Mammary epithelial cell (primary cell): ENCODE measurements at regions of chr15 and their contacts with region 1.

Region 1: GRCh38 chr15:78859971-78860732 is 12.5 kb upstream of the MORF4L1 start:
- DNase-seq: peak; percentile 69
- H3K4me3 ChIP-seq: peak overlapping the region; percentile 51 to 55 (median 52)
- H3K27ac ChIP-seq: peak overlapping the region; percentile 11
- H3K4me1 ChIP-seq: no peaks in the 10 kb centered on the region
- H3K27me3 ChIP-seq: no peaks in the 10 kb centered on the region
- CTCF ChIP-seq: peak; percentile 59 to 62

Region 2: GRCh38 chr15:78761891-78762385 is 98.2 kb before region 1 on chr15:
- CTCF ChIA-PET with region 1: no interaction called
- dilution Hi-C with region 1: no loop called
- in situ Hi-C with region 1: no loop called
- intact Hi-C with region 1: loop called (anchors 5 kb)
- DNase-seq: no peak
- H3K4me3 ChIP-seq: no peak overlapping the region
- H3K27ac ChIP-seq: no peak overlapping the region
- H3K4me1 ChIP-seq: peaks cover 19% of the 10 kb centered on the region
- H3K27me3 ChIP-seq: no peaks in the 10 kb centered on the region
- CTCF ChIP-seq: no peak

Region 3: GRCh38 chr15:78811124-78811824 is 48.9 kb before region 1 on chr15 and contains the start of gene ADAMTS7:
- CTCF ChIA-PET with region 1: no interaction called
- dilution Hi-C with region 1: no loop called
- in situ Hi-C with region 1: no loop called
- intact Hi-C with region 1: loop called (anchors 1 kb)
- DNase-seq: peak; percentile 51
- H3K4me3 ChIP-seq: peak within 1 kb of the TSS; percentile 61 to 74 (median 70)
- H3K27ac ChIP-seq: peak within 1 kb of the TSS; percentile 11
- H3K4me1 ChIP-seq: peaks cover 7% of the 10 kb centered on the region
- H3K27me3 ChIP-seq: no peaks in the 10 kb centered on the region
- CTCF ChIP-seq: peak; percentile 26 to 64
- total RNA-seq, gene ADAMTS7: 6.7 to 10.6 TPM

Region 4: DNA sequence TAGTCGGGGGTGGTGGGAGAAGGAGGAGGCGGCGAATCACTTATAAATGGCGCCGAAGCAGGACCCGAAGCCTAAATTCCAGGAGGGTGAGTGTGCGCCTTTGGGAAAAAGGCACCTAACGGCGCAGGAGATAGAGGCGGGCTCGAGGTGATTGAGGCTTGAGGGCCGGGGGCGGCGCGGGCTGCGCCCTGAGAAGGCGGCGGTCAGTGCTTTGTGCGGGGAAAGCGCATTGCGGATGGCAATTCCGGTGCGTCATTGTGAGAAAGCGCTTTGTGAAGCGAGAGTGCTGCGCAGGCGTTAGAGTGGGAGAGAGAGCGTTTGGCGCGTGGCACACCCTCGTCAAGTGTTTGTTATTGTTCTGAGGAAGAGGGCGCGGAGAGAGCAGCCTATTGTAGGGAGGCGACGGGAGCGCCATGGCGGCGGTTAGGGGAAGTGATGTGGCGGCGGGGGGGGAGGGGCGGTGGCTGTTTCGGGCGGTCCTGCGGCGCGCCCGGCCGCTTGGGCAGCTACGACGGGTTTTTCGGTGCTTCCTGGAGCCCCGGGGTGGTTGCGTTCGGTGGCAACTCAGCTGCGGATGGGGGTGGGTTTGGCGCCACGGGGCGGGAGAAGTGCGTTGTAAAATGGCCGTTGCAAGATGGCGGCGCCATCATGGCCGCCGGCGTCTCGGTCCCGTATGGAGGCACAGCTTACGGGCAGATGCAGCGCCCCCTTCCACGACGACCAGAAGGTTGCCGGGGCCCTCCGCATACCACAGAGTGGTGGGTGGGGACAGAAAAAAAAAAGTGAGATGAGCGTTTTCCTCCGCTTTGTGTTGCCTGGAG is 13.0 kb after region 1 on chr15:
- CTCF ChIA-PET with region 1: interaction called, 3 read pairs
- dilution Hi-C with region 1: no loop called
- in situ Hi-C with region 1: no loop called
- intact Hi-C with region 1: loop called (anchors 1 kb)
- DNase-seq: peak; percentile 87
- H3K4me3 ChIP-seq: peak overlapping the region; percentile 63 to 100 (median 95)
- H3K27ac ChIP-seq: peak overlapping the region; percentile 97
- H3K4me1 ChIP-seq: peaks cover 8% of the 10 kb centered on the region
- H3K27me3 ChIP-seq: no peaks in the 10 kb centered on the region
- CTCF ChIP-seq: no peak

Region 5: GRCh38 chr15:79184465-79184892 is 324.3 kb after region 1 on chr15:
- CTCF ChIA-PET with region 1: no interaction called
- dilution Hi-C with region 1: no loop called
- in situ Hi-C with region 1: no loop called
- intact Hi-C with region 1: loop called (anchors 1 kb)
- DNase-seq: peak; percentile 42
- H3K4me3 ChIP-seq: no peak overlapping the region
- H3K27ac ChIP-seq: no peak overlapping the region
- H3K4me1 ChIP-seq: peaks cover 2% of the 10 kb centered on the region
- H3K27me3 ChIP-seq: no peaks in the 10 kb centered on the region
- CTCF ChIP-seq: peak; percentile 97